Endothelial cell of umbilical vein (primary cell): ENCODE measurements at regions of chr6 and their contacts with region 1.

Region 1: DNA sequence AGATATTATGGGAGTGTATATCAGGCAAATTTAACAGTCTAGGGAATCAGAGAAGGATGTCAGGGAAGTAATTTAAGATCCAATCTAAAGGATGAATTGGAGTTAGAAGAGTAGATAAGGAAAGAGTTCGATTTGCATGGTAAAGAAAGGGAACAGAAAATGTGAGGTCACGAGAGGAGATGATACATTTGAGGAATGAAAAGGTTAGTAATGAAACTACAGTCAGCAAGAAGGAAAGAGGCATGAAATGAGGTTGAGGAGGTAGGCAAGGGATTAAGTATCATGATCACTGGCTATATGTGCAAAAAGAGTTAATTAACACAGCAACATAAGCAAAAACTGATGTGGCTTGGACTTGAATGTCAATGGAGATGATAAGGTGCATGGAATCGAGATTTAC is 22.4 kb downstream of the ZNF318 start:
- DNase-seq: no peak
- H3K4me3 ChIP-seq: no peak overlapping the region
- H3K27ac ChIP-seq: no peak overlapping the region
- H3K4me1 ChIP-seq: no peaks in the 10 kb centered on the region
- H3K27me3 ChIP-seq: no peaks in the 10 kb centered on the region
- CTCF ChIP-seq: no peak
- POLR2A ChIP-seq: no peak

Region 2: GRCh38 chr6:43193939-43194338 is 153.1 kb before region 1 on chr6:
- CTCF ChIA-PET with region 1: no interaction called
- POLR2A ChIA-PET with region 1: interaction called, 11 read pairs
- dilution Hi-C with region 1: no loop called
- intact Hi-C with region 1: no loop called
- DNase-seq: no peak
- H3K4me3 ChIP-seq: no peak overlapping the region
- H3K27ac ChIP-seq: no peak overlapping the region
- H3K4me1 ChIP-seq: no peaks in the 10 kb centered on the region
- H3K27me3 ChIP-seq: no peaks in the 10 kb centered on the region
- CTCF ChIP-seq: no peak
- POLR2A ChIP-seq: no peak

Region 3: GRCh38 chr6:43247113-43247999 is 99.7 kb before region 1 on chr6:
- CTCF ChIA-PET with region 1: no interaction called
- POLR2A ChIA-PET with region 1: no interaction called
- dilution Hi-C with region 1: no loop called
- intact Hi-C with region 1: no loop called
- DNase-seq: peak; percentile 66
- H3K4me3 ChIP-seq: peak overlapping the region; percentile 5 to 44 (median 27)
- H3K27ac ChIP-seq: no peak overlapping the region
- H3K4me1 ChIP-seq: peaks cover 4% of the 10 kb centered on the region
- H3K27me3 ChIP-seq: peaks cover 35 to 51% of the 10 kb centered on the region in 2 experiments
- CTCF ChIP-seq: no peak
- POLR2A ChIP-seq: no peak

Region 4: DNA sequence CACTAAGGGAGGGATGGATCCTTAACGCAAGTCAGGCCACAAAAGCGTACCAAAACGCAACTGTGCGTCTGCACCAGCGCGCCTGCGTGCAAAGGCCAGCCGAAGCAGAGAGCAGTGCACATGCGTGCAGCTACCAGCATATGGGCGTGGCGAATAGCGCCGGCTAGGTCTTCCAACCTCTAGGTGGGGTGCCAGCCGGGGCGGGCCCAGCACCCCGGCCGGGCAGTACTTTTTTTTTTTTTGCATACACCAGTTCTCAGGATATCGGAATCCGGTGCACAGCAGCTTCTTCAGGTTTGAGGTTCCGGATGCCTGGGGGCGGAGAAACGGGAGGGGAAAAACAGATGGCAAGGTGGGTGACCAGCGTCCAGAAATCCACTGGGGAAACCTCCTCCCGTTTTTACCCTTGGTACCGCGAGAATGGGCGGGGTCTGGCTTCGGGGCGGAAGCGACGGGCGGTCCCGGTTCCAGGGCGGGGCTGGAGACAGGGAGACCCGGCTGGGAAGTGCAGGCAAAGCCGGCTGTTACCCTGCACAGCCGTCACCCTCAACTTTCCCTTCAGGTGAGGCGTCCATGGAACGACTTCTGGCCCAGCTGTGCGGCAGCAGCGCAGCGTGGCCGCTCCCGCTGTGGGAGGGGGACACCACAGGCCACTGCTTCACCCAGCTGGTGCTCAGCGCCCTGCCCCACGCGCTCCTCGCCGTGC is 80.5 kb after region 1 on chr6 and contains the start of gene ABCC10:
- CTCF ChIA-PET with region 1: no interaction called
- POLR2A ChIA-PET with region 1: no interaction called
- dilution Hi-C with region 1: no loop called
- intact Hi-C with region 1: no loop called
- DNase-seq: peak; percentile 95
- H3K4me3 ChIP-seq: peak within 1 kb of the TSS; percentile 14 to 66 (median 60)
- H3K27ac ChIP-seq: peak within 1 kb of the TSS; percentile 57
- H3K4me1 ChIP-seq: peaks cover 12% of the 10 kb centered on the region
- H3K27me3 ChIP-seq: no peaks in the 10 kb centered on the region
- CTCF ChIP-seq: peak in 1 of 2 donors; percentile 53
- POLR2A ChIP-seq: peak; percentile 94
- total RNA-seq, gene ABCC10: 34.8 and 37.9 TPM in 2 replicates